GM13977 (cell line): ENCODE measurements at regions of chr12 and their contacts with region 1.

Region 1: GRCh38 chr12:120580787-120581723 is at the start of gene POP5:
- DNase-seq: peak; percentile 93
- CTCF ChIP-seq: no peak

Region 2: DNA sequence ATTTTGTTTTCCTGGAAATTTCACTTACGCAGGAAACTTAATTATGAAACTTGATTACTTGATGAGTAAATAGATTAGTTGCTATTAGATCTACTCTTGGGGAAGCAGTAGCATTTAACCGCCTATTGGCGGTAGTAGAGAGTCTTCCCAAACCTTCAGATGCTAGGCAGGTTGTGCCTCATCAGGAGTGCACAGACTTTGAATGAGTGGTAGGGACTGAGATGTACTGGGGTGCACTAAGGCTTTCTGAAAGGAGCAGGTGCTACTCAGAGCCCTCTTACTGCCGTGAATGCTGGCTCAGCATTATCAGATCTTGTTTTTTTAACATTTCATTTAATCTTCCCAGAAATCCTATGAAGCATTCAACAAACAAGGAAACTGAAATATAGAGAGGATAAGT is 127.1 kb before region 1 on chr12:
- in situ Hi-C with region 1: no loop called
- DNase-seq: peak; percentile 56
- CTCF ChIP-seq: peak; percentile 65

Region 3: GRCh38 chr12:120710031-120710804 is 129.2 kb after region 1 on chr12 and contains the start of gene UNC119B:
- in situ Hi-C with region 1: loop called (anchors 10 kb)
- DNase-seq: peak; percentile 92
- CTCF ChIP-seq: no peak

Region 4: GRCh38 chr12:120971299-120972179 is 390.5 kb after region 1 on chr12:
- in situ Hi-C with region 1: loop called (anchors 25 kb)
- DNase-seq: peak; percentile 80
- CTCF ChIP-seq: peak; percentile 66